CD4-positive, alpha-beta T cell (primary cell): ENCODE measurements at regions of chr19 and their contacts with region 1.

Region 1: GRCh38 chr19:23378948-23379347 is 16.3 kb downstream of the ZNF91 start:
- DNase-seq: no peak
- ATAC-seq: no peak
- H3K4me3 ChIP-seq: no peak overlapping the region
- H3K4me3 Mint-ChIP-seq: no peak overlapping the region
- H3K27ac ChIP-seq: no peak overlapping the region
- H3K27ac Mint-ChIP-seq: no peak overlapping the region
- H3K4me1 ChIP-seq: peaks cover 4% of the 10 kb centered on the region
- H3K4me1 Mint-ChIP-seq: peaks cover 19% of the 10 kb centered on the region
- H3K27me3 ChIP-seq: no peaks in the 10 kb centered on the region
- H3K27me3 Mint-ChIP-seq: no peaks in the 10 kb centered on the region
- CTCF ChIP-seq: no peak

Region 2: DNA sequence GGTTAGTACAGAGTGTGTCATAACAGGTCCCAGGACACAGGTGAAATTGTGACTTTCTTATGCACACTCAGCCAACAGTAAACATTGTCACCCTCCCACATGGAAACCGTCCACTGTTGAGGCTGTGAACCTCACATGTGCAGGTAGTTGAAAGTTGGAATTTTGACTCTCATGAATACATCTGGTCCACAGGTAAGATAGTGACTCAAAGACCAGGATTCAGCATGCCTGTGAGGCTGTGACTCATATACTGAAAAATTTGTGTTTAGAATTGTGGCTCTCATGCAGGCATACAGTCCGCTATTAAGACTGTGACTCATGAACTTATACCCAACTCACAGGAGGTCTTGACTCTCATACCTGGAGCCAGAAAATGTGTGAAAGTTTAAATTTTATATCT is 443.8 kb before region 1 on chr19:
- CTCF ChIA-PET with region 1: no interaction called
- POLR2A ChIA-PET with region 1: no interaction called
- intact Hi-C with region 1: no loop called
- DNase-seq: no peak
- ATAC-seq: no peak
- H3K4me3 ChIP-seq: no peak overlapping the region
- H3K4me3 Mint-ChIP-seq: no peak overlapping the region
- H3K27ac ChIP-seq: no peak overlapping the region
- H3K27ac Mint-ChIP-seq: no peak overlapping the region
- H3K4me1 ChIP-seq: no peaks in the 10 kb centered on the region
- H3K4me1 Mint-ChIP-seq: no peaks in the 10 kb centered on the region
- H3K27me3 ChIP-seq: no peaks in the 10 kb centered on the region
- H3K27me3 Mint-ChIP-seq: no peaks in the 10 kb centered on the region
- CTCF ChIP-seq: no peak

Region 3: GRCh38 chr19:23343434-23344010 is 35.4 kb before region 1 on chr19:
- CTCF ChIA-PET with region 1: no interaction called
- POLR2A ChIA-PET with region 1: no interaction called
- intact Hi-C with region 1: loop called in 1 of 2 experiments (anchors 5 kb)
- DNase-seq: no peak
- ATAC-seq: no peak
- H3K4me3 ChIP-seq: no peak overlapping the region
- H3K4me3 Mint-ChIP-seq: no peak overlapping the region
- H3K27ac ChIP-seq: no peak overlapping the region
- H3K27ac Mint-ChIP-seq: no peak overlapping the region
- H3K4me1 ChIP-seq: no peaks in the 10 kb centered on the region
- H3K4me1 Mint-ChIP-seq: peaks cover 19% of the 10 kb centered on the region
- H3K27me3 ChIP-seq: no peaks in the 10 kb centered on the region
- H3K27me3 Mint-ChIP-seq: no peaks in the 10 kb centered on the region
- CTCF ChIP-seq: no peak